ENCODE measurements at regions of chr1 and their contacts with region 1.

Region 1: GRCh38 chr1:109532365-109533136 is 7.1 kb upstream of the GPR61 start:
- DNase-seq: no peak
- ATAC-seq: peak; percentile 93
- H3K4me3 ChIP-seq: peak overlapping the region; percentile 41; the same call in 1 of the 2 replicates
- H3K27ac ChIP-seq: peak overlapping the region; percentile 56
- H3K4me1 ChIP-seq: peaks cover 14% of the 10 kb centered on the region
- H3K27me3 ChIP-seq: no peaks in the 10 kb centered on the region
- CTCF ChIP-seq: peak; percentile 96 to 99 (median 97)
- EP300 ChIP-seq: no peak
- POLR2A ChIP-seq: no peak
- RAD21 ChIP-seq: peak; percentile 92

Region 2: DNA sequence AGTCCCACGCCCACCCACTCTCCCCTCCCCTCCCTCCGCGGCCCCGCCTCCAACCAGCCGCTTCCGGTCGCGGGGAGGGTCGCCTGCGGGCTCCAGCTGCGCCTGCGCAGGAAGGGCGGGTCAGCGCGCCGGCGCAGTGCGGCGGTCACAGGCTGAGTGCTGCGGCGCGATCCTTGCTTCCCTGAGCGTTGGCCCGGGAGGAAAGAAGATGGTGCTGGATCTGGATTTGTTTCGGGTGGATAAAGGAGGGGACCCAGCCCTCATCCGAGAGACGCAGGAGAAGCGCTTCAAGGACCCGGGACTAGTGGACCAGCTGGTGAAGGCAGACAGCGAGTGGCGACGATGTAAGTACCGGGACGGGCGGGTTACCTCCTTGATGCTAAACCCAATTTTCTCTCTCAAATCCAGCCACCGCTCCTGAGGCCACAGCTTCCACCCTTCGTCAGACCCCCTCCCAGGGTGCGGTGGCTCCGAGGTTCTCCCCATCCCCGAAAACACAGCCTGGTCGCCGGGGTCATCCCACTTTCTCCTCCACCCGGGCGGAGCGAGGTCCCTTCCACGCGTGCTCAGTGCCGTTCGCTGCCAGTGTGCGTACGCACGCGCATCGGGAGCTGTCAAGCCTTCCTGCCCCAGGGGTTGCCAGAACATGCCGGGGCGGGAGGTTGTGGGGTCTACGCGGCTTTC is 318.6 kb before region 1 on chr1 and contains the start of gene SARS1:
- CTCF ChIA-PET with region 1: interaction called, 13 read pairs
- POLR2A ChIA-PET with region 1: no interaction called
- RAD21 ChIA-PET with region 1: interaction called, 4 read pairs
- SMC1A ChIA-PET with region 1: interaction called, 6 read pairs
- in situ Hi-C with region 1: no loop called
- intact Hi-C with region 1: no loop called
- DNase-seq: peak; percentile 62
- ATAC-seq: peak; percentile 94
- H3K4me3 ChIP-seq: peak within 1 kb of the TSS; percentile 89
- H3K27ac ChIP-seq: peak within 1 kb of the TSS; percentile 88
- H3K4me1 ChIP-seq: no peaks in the 10 kb centered on the region
- H3K27me3 ChIP-seq: no peaks in the 10 kb centered on the region
- CTCF ChIP-seq: no peak
- EP300 ChIP-seq: 0 out of 4 replicates have a peak, but pooled peaks of 1 of the 2 experiments have one; percentile 13
- POLR2A ChIP-seq: peak; percentile 82
- RAD21 ChIP-seq: no peak
- polyA plus RNA-seq, gene SARS1: 148 to 202 TPM

Region 3: GRCh38 chr1:109277434-109278204 is 254.9 kb before region 1 on chr1:
- CTCF ChIA-PET with region 1: interaction called, 122 read pairs
- POLR2A ChIA-PET with region 1: no interaction called
- RAD21 ChIA-PET with region 1: interaction called, 29 read pairs
- SMC1A ChIA-PET with region 1: interaction called, 12 read pairs
- in situ Hi-C with region 1: no loop called
- intact Hi-C with region 1: loop called (anchors 1 kb)
- DNase-seq: peak; percentile 54
- ATAC-seq: peak; percentile 94
- H3K4me3 ChIP-seq: no peak overlapping the region
- H3K27ac ChIP-seq: no peak overlapping the region
- H3K4me1 ChIP-seq: no peaks in the 10 kb centered on the region; the same call in none of the 2 replicates
- H3K27me3 ChIP-seq: peaks cover 0 to 1% of the 10 kb centered on the region in 2 experiments; a peak in 1 of 4 replicates
- CTCF ChIP-seq: peak; percentile 92 to 97 (median 97); a peak in 5 of 6 replicates
- EP300 ChIP-seq: no peak
- POLR2A ChIP-seq: no peak
- RAD21 ChIP-seq: peak; percentile 76

Region 4: DNA sequence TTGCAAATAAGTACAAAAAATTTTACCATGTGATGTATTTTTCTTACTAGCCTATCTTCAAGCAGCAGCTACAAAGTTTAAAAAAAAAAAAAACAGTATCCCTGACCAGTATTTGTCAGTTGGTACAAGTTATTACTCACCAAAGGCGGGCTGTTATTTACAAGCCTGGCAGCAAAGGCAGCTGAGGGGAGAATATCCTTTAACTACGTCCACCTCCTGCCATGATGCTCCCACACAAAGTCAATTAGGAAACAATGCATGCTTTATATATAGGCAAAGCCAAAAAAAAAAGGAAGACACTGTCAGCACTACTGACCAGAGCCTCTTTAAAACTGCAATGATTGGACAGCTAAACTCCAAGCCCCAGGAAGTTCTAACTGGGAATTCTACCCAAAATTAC is 120.0 kb before region 1 on chr1:
- CTCF ChIA-PET with region 1: interaction called, 14 read pairs
- POLR2A ChIA-PET with region 1: no interaction called
- RAD21 ChIA-PET with region 1: interaction called, 3 read pairs
- SMC1A ChIA-PET with region 1: no interaction called
- in situ Hi-C with region 1: no loop called
- intact Hi-C with region 1: no loop called
- DNase-seq: no peak
- ATAC-seq: no peak
- H3K4me3 ChIP-seq: no peak overlapping the region
- H3K27ac ChIP-seq: no peak overlapping the region
- H3K4me1 ChIP-seq: no peaks in the 10 kb centered on the region
- H3K27me3 ChIP-seq: no peaks in the 10 kb centered on the region
- CTCF ChIP-seq: no peak
- EP300 ChIP-seq: no peak
- POLR2A ChIP-seq: no peak
- RAD21 ChIP-seq: no peak

Region 5: DNA sequence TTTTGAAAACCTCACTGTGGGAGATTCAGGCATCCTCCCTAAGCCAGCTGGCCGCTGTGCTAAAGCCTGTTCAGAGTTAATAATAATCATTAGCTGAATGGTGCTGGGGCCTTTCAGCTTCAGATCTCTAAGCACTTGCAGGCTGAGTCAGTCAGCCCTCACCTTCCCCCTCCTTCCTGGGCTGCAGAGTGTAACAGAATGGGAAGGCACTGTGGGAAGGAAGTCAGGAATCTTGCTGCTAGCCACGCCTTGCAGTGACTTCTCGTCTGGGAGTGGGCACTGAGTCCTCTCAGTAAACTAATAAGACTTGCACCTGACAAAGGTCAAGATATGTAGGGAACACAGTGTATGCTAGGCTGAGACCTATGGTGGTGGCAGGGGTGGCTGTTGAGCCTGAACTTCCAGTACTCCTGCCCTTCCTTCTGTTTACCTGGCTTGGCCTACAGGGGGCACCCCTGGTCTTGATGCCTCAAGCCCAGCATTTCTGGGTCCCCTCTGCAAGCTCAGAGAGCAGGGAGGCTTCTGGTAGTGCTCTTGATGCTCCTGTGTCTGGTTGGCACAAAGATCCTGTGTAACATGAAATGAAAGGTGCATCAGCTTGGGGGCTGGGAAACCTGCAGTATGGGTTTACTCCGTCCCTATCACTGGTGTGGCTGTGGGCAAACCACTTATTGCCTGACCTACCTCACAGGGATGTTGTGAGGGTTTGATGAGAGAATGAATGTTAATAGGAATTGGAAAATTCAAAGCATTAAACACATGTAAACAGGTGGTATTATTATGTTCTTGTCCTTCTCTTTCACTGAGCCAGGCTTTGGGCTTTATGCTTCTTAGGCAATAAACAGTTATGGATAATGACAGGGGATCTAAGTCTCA is 32.7 kb before region 1 on chr1:
- CTCF ChIA-PET with region 1: interaction called, 1,280 read pairs
- POLR2A ChIA-PET with region 1: interaction called, 17 read pairs
- RAD21 ChIA-PET with region 1: interaction called, 422 read pairs
- SMC1A ChIA-PET with region 1: interaction called, 431 read pairs
- in situ Hi-C with region 1: no loop called
- intact Hi-C with region 1: loop called (anchors 1 kb)
- DNase-seq: no peak
- ATAC-seq: peak; percentile 71
- H3K4me3 ChIP-seq: no peak overlapping the region
- H3K27ac ChIP-seq: no peak overlapping the region
- H3K4me1 ChIP-seq: peaks cover 1% of the 10 kb centered on the region
- H3K27me3 ChIP-seq: no peaks in the 10 kb centered on the region
- CTCF ChIP-seq: peak; percentile 49 to 57 (median 52); a peak in 5 of 6 replicates
- EP300 ChIP-seq: no peak
- POLR2A ChIP-seq: no peak
- RAD21 ChIP-seq: peak; percentile 50; the same call in 1 of the 2 replicates

Region 6: DNA sequence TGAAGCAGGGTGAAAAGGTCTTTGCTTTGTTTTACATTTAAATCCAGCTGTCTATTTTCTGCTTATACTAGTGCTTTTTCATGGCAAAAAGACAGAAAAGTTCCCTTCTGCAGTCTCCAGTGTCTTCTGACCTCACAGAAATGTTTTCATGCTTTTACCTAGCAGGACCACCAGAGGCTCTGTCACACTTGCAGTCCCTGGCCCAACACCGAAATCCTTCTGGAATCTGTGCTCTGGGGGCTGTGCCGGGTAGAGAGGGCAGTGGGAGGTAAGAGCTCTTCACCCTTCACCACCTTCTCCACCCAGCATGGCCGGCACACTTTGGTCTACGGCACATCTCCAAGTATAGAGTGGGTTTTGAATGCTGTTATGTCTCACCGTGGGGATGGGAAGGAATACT is 66.1 kb after region 1 on chr1:
- CTCF ChIA-PET with region 1: interaction called, 10 read pairs
- POLR2A ChIA-PET with region 1: no interaction called
- RAD21 ChIA-PET with region 1: no interaction called
- SMC1A ChIA-PET with region 1: interaction called, 4 read pairs
- in situ Hi-C with region 1: no loop called
- intact Hi-C with region 1: no loop called
- DNase-seq: no peak
- ATAC-seq: peak; percentile 48; the same call in 2 of the 3 replicates
- H3K4me3 ChIP-seq: no peak overlapping the region
- H3K27ac ChIP-seq: no peak overlapping the region
- H3K4me1 ChIP-seq: no peaks in the 10 kb centered on the region
- H3K27me3 ChIP-seq: no peaks in the 10 kb centered on the region
- CTCF ChIP-seq: peak in 2 of 3 experiments; percentile 9 to 13; a peak in 1 of 6 replicates
- EP300 ChIP-seq: no peak
- POLR2A ChIP-seq: no peak
- RAD21 ChIP-seq: 0 out of 2 replicates have a peak, but pooled peaks have one; percentile 13

Measured in GM12878 (cell line).